ENCODE measurements at regions of chr12 and their contacts with region 1.

Region 1: DNA sequence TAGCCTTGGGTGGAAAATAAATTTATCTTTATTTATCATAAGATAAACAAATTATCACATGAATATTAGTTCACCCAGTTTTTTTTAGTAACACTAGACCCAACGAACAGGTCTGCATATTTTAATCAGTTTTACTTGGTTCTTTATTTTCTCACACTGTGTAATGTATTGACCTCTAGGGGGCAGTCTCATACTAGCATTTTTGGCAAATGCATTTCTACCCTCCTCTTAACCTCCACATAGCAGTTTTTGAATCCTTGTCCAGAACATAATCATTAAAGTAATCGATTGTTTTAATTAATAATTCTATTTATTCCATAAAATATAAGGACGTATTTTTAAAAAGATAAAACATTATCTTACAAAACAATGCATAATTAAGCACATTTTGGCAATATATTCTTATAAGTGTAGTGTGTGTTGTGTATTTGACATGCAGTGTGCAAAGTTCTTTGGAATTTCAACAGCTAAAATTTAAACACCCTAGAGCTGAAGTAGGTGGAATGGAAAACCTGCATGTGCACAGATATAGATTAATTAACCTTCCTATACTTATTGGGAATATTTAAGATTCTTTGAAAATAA is 31.6 kb upstream of the PTPRQ start:
- DNase-seq: peak; percentile 8
- ATAC-seq: peak; percentile 79
- H3K4me3 ChIP-seq: no peak overlapping the region
- H3K27ac ChIP-seq: no peak overlapping the region
- H3K4me1 ChIP-seq: no peaks in the 10 kb centered on the region
- H3K27me3 ChIP-seq: no peaks in the 10 kb centered on the region
- CTCF ChIP-seq: peak; percentile 77; the same call in 1 of the 2 replicates

Region 2: DNA sequence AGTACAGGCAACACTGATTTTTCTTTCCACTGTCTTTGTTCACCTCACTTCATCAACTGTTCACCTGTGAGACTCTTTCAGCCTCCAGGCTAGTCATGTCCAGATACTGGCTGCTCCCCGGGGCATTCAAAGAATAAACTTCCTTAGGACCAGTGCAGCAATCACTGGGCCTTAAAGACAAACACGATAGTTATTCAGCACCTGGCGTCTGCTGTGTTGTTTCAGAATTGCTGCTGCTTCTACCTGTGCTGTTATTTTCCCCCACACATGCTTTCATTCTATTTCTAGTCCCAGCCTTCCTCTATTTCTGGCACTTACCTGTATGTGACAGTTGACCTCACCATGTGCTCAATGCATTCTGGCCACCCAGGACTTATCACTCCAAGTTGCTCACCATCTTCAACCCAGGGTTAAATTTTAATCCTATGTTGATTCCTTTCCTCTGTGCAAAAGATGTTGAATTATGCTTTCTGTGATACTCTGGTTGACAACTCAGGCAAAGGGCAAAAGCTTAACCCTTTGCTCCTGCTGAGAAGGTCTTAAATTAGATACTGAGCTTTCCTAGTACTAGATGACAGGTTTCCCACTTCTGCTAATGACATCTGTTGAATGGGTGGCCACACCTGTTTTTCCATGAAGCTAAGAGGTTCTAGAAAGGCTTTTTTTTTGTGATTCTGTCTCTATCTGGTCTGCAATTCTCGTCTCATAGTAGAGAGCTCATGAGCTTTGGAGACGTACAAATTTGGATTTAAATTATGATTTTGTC is 72.9 kb after region 1 on chr12:
- CTCF ChIA-PET with region 1: no interaction called
- POLR2A ChIA-PET with region 1: no interaction called
- in situ Hi-C with region 1: no loop called
- intact Hi-C with region 1: no loop called
- DNase-seq: no peak
- ATAC-seq: no peak
- H3K4me3 ChIP-seq: no peak overlapping the region
- H3K27ac ChIP-seq: no peak overlapping the region
- H3K4me1 ChIP-seq: no peaks in the 10 kb centered on the region
- H3K27me3 ChIP-seq: no peaks in the 10 kb centered on the region
- CTCF ChIP-seq: no peak

Region 3: DNA sequence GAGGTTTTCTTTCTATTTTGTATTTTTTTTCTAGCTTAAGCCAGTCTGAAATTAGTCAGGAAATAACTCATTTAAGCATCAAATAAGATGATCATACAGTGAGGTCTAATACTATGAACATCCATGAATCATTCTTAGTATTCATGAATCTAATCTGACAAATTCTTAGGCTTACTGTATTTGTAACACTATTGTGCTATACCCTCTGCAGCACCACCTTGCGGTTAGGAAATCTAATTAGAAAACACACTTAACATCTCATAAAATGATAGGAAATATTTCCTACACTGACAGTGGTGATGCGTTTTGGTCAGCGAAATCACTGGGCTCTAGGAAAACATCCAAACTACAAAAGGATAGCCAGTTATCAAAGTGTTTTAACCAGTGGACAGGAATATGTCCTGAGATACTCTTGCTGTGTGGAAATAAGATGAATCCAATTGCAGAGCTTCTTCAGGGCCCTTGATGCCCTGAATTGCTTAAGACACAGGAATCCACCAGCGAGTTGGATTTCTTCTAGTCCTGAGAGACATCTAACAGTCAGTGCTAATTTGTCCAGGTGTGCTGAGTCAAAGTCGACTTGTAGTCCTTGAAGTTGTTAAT is 185.6 kb after region 1 on chr12:
- CTCF ChIA-PET with region 1: no interaction called
- POLR2A ChIA-PET with region 1: no interaction called
- in situ Hi-C with region 1: no loop called
- intact Hi-C with region 1: loop called (anchors 5 kb)
- DNase-seq: peak; percentile 2
- ATAC-seq: no peak
- H3K4me3 ChIP-seq: no peak overlapping the region
- H3K27ac ChIP-seq: no peak overlapping the region
- H3K4me1 ChIP-seq: no peaks in the 10 kb centered on the region
- H3K27me3 ChIP-seq: no peaks in the 10 kb centered on the region
- CTCF ChIP-seq: peak; percentile 39; the same call in 1 of the 2 replicates

Region 4: GRCh38 chr12:80763874-80764273 is 351.4 kb after region 1 on chr12:
- CTCF ChIA-PET with region 1: no interaction called
- POLR2A ChIA-PET with region 1: no interaction called
- in situ Hi-C with region 1: no loop called
- intact Hi-C with region 1: loop called (anchors 2 kb)
- DNase-seq: peak; percentile 5
- ATAC-seq: no peak
- H3K4me3 ChIP-seq: no peak overlapping the region
- H3K27ac ChIP-seq: no peak overlapping the region
- H3K4me1 ChIP-seq: no peaks in the 10 kb centered on the region
- H3K27me3 ChIP-seq: no peaks in the 10 kb centered on the region
- CTCF ChIP-seq: peak; percentile 58; the same call in 1 of the 2 replicates

Region 5: DNA sequence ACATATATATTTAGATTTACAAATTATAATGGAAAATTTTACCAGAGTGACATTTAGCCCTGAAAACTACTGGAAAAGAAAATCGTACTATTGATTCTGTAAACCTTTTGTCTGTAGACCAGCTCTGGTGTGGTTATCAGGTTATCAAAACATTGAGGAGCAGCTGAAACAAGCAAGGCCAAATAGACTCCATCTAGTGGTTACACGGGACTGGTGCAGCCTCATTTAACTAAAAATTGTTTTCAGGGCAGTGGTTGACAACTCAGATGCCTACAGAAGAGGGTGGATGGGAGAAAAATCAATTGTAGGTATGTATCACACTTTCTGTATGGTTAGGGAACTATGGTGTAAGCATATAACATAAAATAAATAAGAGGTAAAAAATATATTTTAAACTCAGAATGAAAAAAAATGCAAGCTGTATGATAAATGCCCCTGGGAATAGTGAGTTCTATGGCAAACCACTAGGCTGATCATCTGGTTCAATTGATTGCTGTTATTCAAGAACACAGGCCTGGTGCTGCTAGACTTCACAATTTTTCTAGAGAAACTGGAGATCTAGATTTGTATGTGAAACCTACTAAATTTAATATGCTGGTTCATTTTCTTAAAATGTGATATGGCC is 716.6 kb after region 1 on chr12:
- CTCF ChIA-PET with region 1: no interaction called
- POLR2A ChIA-PET with region 1: no interaction called
- in situ Hi-C with region 1: no loop called
- intact Hi-C with region 1: loop called (anchors 10 kb)
- DNase-seq: peak; percentile 15
- ATAC-seq: peak; percentile 77
- H3K4me3 ChIP-seq: no peak overlapping the region
- H3K27ac ChIP-seq: no peak overlapping the region
- H3K4me1 ChIP-seq: no peaks in the 10 kb centered on the region
- H3K27me3 ChIP-seq: no peaks in the 10 kb centered on the region
- CTCF ChIP-seq: peak; percentile 82